WTC11 (cell line): ENCODE measurements at regions of chr18 and their contacts with region 1.

Region 1: DNA sequence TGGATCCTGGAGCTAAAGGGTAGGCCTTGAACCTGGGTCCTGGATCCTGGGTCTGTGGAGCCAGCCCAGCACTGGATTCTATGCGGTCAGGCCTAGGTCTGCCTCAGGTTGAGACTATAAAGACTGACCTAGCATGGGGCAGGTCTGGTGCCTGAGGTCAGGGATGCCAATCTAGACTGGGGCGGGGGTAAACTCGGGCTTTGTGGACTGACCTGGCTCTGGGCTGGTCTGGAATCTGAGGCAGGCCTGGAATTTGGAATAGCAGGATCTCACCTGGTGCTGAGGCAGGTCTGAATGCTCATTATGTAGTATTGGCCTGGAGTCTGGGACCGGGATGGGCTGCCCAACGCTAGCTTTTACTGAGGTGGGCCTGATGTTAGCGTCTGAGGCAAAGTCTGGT is 256.0 kb downstream of the KIAA1328 start:
- DNase-seq: peak; percentile 67
- ATAC-seq: peak; percentile 99
- H3K4me3 Mint-ChIP-seq: no peak overlapping the region
- H3K27ac Mint-ChIP-seq: peak overlapping the region; percentile 90
- H3K4me1 Mint-ChIP-seq: peaks cover 11% of the 10 kb centered on the region
- H3K27me3 Mint-ChIP-seq: no peaks in the 10 kb centered on the region
- CTCF ChIP-seq: no peak

Region 2: DNA sequence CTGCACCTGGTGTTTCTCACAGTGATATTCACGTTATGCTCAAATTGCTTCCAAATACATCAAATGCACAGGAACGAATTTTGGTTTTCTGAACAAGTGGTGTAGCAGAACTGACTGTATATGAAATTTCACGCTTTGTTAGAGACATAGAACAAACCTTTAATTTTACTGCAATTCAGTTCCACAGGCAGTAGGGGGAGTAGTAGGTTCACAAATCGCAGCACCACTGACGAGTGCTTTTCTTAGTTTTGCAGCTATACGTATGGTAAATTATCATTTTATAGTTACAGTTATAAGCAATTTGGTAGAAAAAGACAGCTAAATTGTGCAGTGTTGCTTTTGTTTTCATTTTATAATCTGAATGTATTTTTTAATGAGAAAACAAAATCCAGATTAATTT is 142.6 kb before region 1 on chr18:
- CTCF ChIA-PET with region 1: interaction called, 11 read pairs
- POLR2A ChIA-PET with region 1: no interaction called
- DNase-seq: no peak
- ATAC-seq: peak; percentile 69
- H3K4me3 Mint-ChIP-seq: no peak overlapping the region
- H3K27ac Mint-ChIP-seq: no peak overlapping the region
- H3K4me1 Mint-ChIP-seq: peaks cover 32% of the 10 kb centered on the region
- H3K27me3 Mint-ChIP-seq: no peaks in the 10 kb centered on the region
- CTCF ChIP-seq: peak; percentile 73